Heart right ventricle (tissue), 16 donors: ENCODE measurements at regions of chr11 and their contacts with region 1.

Region 1: DNA sequence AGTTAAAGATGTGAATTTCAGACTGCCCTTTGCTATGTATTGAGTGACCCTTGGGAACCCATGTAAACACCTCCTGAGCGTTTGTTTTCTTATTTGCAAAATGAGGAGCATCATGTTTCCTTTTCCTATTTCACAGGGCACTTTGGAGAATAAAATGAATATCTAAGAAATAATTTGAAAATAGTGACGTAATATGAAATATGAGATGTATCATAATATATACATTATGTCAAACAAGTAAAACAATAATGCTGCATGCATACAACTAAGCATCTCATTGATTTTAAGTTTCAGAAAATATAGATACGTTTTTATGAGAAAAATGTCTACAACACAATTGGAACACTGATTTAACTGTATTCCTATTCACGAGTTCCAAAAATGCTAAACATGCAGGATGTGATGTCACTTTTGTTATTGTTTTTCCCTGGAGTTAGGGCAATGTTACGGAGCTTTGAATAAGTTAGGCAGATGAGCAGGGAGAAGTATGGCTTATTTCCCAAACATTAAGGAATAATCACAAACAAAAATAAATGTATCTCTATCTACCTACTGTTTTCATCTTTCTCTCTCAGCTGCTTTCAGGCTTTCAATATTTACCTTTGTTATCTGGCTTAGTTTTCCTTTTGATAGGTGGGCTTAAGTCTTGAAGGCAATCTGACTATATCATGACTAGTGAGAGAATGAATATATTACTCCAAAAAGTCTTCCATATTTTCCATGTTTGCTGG is 854.2 kb upstream of the CCDC90B start:
- DNase-seq: no peak
- ATAC-seq: no peak
- H3K4me3 ChIP-seq: no peak overlapping the region
- H3K27ac ChIP-seq: no peak overlapping the region
- H3K4me1 ChIP-seq: no peaks in the 10 kb centered on the region
- H3K27me3 ChIP-seq: no peaks in the 10 kb centered on the region
- CTCF ChIP-seq: no peak

Region 2: GRCh38 chr11:84089072-84090057 is 51.0 kb before region 1 on chr11:
- intact Hi-C with region 1: loop called in 1 of 10 experiments (anchors 10 kb)
- DNase-seq: peak in 1 of 2 donors; percentile 10
- ATAC-seq: peak in 2 of 8 donors; percentile 45 to 47
- H3K4me3 ChIP-seq: no peak overlapping the region
- H3K27ac ChIP-seq: no peak overlapping the region
- H3K4me1 ChIP-seq: peaks cover 0 to 7% (median 0%) of the 10 kb centered on the region in 9 donors
- H3K27me3 ChIP-seq: no peaks in the 10 kb centered on the region
- CTCF ChIP-seq: no peak

Region 3: GRCh38 chr11:84103096-84103495 is 37.2 kb before region 1 on chr11:
- intact Hi-C with region 1: no loop called
- DNase-seq: no peak
- ATAC-seq: no peak
- H3K4me3 ChIP-seq: no peak overlapping the region
- H3K27ac ChIP-seq: no peak overlapping the region
- H3K4me1 ChIP-seq: no peaks in the 10 kb centered on the region
- H3K27me3 ChIP-seq: no peaks in the 10 kb centered on the region
- CTCF ChIP-seq: no peak